ENCODE measurements at regions of chr9 and their contacts with region 1.

Region 1: GRCh38 chr9:125241000-125241862 is at the start of gene HSPA5:
- DNase-seq: peak; percentile 99 to 100
- H3K4me3 ChIP-seq: peak within 1 kb of the TSS; percentile 95
- H3K4me3 Mint-ChIP-seq: peak within 1 kb of the TSS; percentile 93
- H3K27ac Mint-ChIP-seq: peak within 1 kb of the TSS; percentile 90
- H3K4me1 ChIP-seq: peaks cover 25% of the 10 kb centered on the region
- H3K4me1 Mint-ChIP-seq: peaks cover 28% of the 10 kb centered on the region
- H3K27me3 ChIP-seq: no peaks in the 10 kb centered on the region
- H3K27me3 Mint-ChIP-seq: no peaks in the 10 kb centered on the region
- CTCF ChIP-seq: no peak
- total RNA-seq, gene HSPA5: 287 and 288 TPM in 2 replicates

Region 2: GRCh38 chr9:124861342-124862229 is 379.6 kb before region 1 on chr9 and contains the starts of genes ARPC5L and RPL35:
- CTCF ChIA-PET with region 1: no interaction called
- POLR2A ChIA-PET with region 1: interaction called, 3 read pairs
- intact Hi-C with region 1: loop called (anchors 10 kb)
- DNase-seq: peak; percentile 95 to 97
- H3K4me3 ChIP-seq: peak within 1 kb of the TSS; percentile 85
- H3K4me3 Mint-ChIP-seq: peak within 1 kb of the TSS; percentile 85
- H3K27ac Mint-ChIP-seq: peak within 1 kb of the TSS; percentile 95
- H3K4me1 ChIP-seq: peaks cover 10% of the 10 kb centered on the region; the same call in 1 of the 2 replicates
- H3K4me1 Mint-ChIP-seq: peaks cover 7% of the 10 kb centered on the region
- H3K27me3 ChIP-seq: no peaks in the 10 kb centered on the region
- H3K27me3 Mint-ChIP-seq: no peaks in the 10 kb centered on the region
- CTCF ChIP-seq: peak in 1 of 2 experiments; percentile 30
- total RNA-seq, gene ARPC5L: 59.0 and 60.1 TPM in 2 replicates
- total RNA-seq, gene RPL35: 1,528 and 1,598 TPM in 2 replicates

Region 3: GRCh38 chr9:125200210-125201047 is 40.8 kb before region 1 on chr9 and contains the start of gene RABEPK:
- CTCF ChIA-PET with region 1: interaction called, 7 read pairs
- POLR2A ChIA-PET with region 1: interaction called, 21 read pairs
- intact Hi-C with region 1: loop called (anchors 2 kb)
- DNase-seq: peak; percentile 94 to 97
- H3K4me3 ChIP-seq: peak within 1 kb of the TSS; percentile 69
- H3K4me3 Mint-ChIP-seq: peak within 1 kb of the TSS; percentile 80
- H3K27ac Mint-ChIP-seq: peak within 1 kb of the TSS; percentile 62
- H3K4me1 ChIP-seq: peaks cover 13% of the 10 kb centered on the region
- H3K4me1 Mint-ChIP-seq: peaks cover 12% of the 10 kb centered on the region
- H3K27me3 ChIP-seq: no peaks in the 10 kb centered on the region
- H3K27me3 Mint-ChIP-seq: no peaks in the 10 kb centered on the region
- CTCF ChIP-seq: no peak
- total RNA-seq, gene RABEPK: 28.1 and 28.4 TPM in 2 replicates

Region 4: GRCh38 chr9:125255781-125256391 is 14.7 kb after region 1 on chr9:
- CTCF ChIA-PET with region 1: interaction called, 10 read pairs
- POLR2A ChIA-PET with region 1: interaction called, 22 read pairs
- intact Hi-C with region 1: loop called (anchors 1 kb)
- DNase-seq: peak; percentile 47 to 69
- H3K4me3 ChIP-seq: no peak overlapping the region
- H3K4me3 Mint-ChIP-seq: no peak overlapping the region
- H3K27ac Mint-ChIP-seq: no peak overlapping the region
- H3K4me1 ChIP-seq: 0 out of 2 replicates have a peak, but pooled peaks cover 4% of the 10 kb centered on the region
- H3K4me1 Mint-ChIP-seq: peaks cover 4% of the 10 kb centered on the region
- H3K27me3 ChIP-seq: no peaks in the 10 kb centered on the region
- H3K27me3 Mint-ChIP-seq: no peaks in the 10 kb centered on the region
- CTCF ChIP-seq: peak; percentile 56 to 62

Region 5: GRCh38 chr9:125261501-125262293 is 20.5 kb after region 1 on chr9 and contains the start of gene GAPVD1:
- CTCF ChIA-PET with region 1: interaction called, 10 read pairs
- POLR2A ChIA-PET with region 1: interaction called, 22 read pairs
- intact Hi-C with region 1: loop called (anchors 1 kb)
- DNase-seq: peak; percentile 95 to 96
- H3K4me3 ChIP-seq: peak within 1 kb of the TSS; percentile 96
- H3K4me3 Mint-ChIP-seq: peak within 1 kb of the TSS; percentile 79
- H3K27ac Mint-ChIP-seq: peak within 1 kb of the TSS; percentile 97
- H3K4me1 ChIP-seq: 0 out of 2 replicates have a peak, but pooled peaks cover 6% of the 10 kb centered on the region
- H3K4me1 Mint-ChIP-seq: peaks cover 17% of the 10 kb centered on the region
- H3K27me3 ChIP-seq: no peaks in the 10 kb centered on the region
- H3K27me3 Mint-ChIP-seq: no peaks in the 10 kb centered on the region
- CTCF ChIP-seq: peak; percentile 52
- total RNA-seq, gene GAPVD1: 66.2 TPM in 2 replicates

Region 6: DNA sequence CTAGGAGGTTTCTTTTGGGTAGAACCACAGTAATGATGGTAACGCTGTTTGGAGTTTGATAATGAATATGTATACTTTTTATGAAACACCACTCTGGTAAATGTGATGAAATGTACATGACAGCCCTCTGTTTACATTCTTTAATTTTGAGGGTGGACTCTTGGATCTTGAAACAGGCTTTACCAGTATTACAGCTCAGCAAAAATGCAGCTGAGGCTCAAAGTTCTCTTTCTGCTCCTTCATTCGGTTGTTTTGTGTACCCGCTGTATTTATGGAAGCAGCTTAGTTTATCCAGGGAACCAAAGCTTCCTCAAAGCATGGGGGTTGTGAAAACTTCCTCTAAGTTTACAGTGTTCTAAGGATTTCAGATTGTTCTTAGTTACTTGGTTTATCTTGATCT is 31.5 kb after region 1 on chr9:
- CTCF ChIA-PET with region 1: no interaction called
- POLR2A ChIA-PET with region 1: interaction called, 17 read pairs
- intact Hi-C with region 1: loop called (anchors 1 kb)
- DNase-seq: peak; percentile 79 to 86
- H3K4me3 ChIP-seq: no peak overlapping the region; the same call in 1 of the 2 replicates
- H3K4me3 Mint-ChIP-seq: peak overlapping the region; percentile 55
- H3K27ac Mint-ChIP-seq: peak overlapping the region; percentile 68
- H3K4me1 ChIP-seq: peaks cover 61% of the 10 kb centered on the region
- H3K4me1 Mint-ChIP-seq: peaks cover 25% of the 10 kb centered on the region
- H3K27me3 ChIP-seq: no peaks in the 10 kb centered on the region
- H3K27me3 Mint-ChIP-seq: no peaks in the 10 kb centered on the region
- CTCF ChIP-seq: no peak

Region 7: GRCh38 chr9:125296833-125297372 is 55.7 kb after region 1 on chr9:
- CTCF ChIA-PET with region 1: no interaction called
- POLR2A ChIA-PET with region 1: interaction called, 15 read pairs
- intact Hi-C with region 1: loop called (anchors 1 kb)
- DNase-seq: peak; percentile 80 to 83
- H3K4me3 ChIP-seq: no peak overlapping the region
- H3K4me3 Mint-ChIP-seq: peak overlapping the region; percentile 39
- H3K27ac Mint-ChIP-seq: peak overlapping the region; percentile 63
- H3K4me1 ChIP-seq: peaks cover 29% of the 10 kb centered on the region
- H3K4me1 Mint-ChIP-seq: peaks cover 12% of the 10 kb centered on the region
- H3K27me3 ChIP-seq: no peaks in the 10 kb centered on the region
- H3K27me3 Mint-ChIP-seq: no peaks in the 10 kb centered on the region
- CTCF ChIP-seq: no peak

Measured in Caco-2 (cell line).